Activated CD4-positive, alpha-beta T cell treated with anti-CD3 and anti-CD28 coated beads, Interleukin-2, amount 10 ng/mL, durations not matched to agents 24 days and 14 days (primary cell): ENCODE measurements at regions of chr15 and their contacts with region 1.

Region 1: DNA sequence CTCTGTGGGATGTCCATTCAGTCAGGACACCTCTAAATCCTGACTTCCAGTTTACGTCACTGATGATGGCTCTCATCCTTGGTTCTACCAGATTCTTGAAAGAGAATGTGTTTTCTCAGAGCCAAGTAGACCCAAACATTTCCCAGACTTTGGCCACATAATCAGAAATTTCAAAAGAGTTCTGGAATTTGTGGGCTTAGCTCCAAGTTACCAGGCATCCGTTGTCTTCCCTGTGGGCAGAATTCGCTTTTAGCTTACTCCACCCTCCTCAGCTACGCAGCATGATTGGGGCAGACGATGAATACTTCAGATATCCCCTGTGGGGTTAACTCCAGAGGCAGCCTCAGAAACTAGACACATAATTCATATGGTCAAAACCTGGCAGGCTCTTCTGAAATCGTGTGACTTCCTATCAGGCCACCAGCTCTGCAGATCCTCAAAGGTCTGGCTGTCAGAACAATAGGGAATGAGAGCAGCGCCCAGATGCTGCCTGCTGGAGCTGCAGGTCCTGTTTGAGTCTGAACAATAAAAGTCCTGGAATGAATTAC is 30.6 kb downstream of the CRTC3 start:
- DNase-seq: no peak
- H3K4me3 Mint-ChIP-seq: no peak overlapping the region
- H3K27ac Mint-ChIP-seq: no peak overlapping the region
- H3K4me1 Mint-ChIP-seq: peaks cover 75% of the 10 kb centered on the region
- H3K27me3 Mint-ChIP-seq: no peaks in the 10 kb centered on the region

Region 2: GRCh38 chr15:90539789-90540188 is 20.5 kb before region 1 on chr15:
- intact Hi-C with region 1: loop called (anchors 2 kb)
- DNase-seq: peak; percentile 82
- H3K4me3 Mint-ChIP-seq: peak overlapping the region; percentile 83
- H3K27ac Mint-ChIP-seq: peak overlapping the region; percentile 92
- H3K4me1 Mint-ChIP-seq: peaks cover 73% of the 10 kb centered on the region
- H3K27me3 Mint-ChIP-seq: no peaks in the 10 kb centered on the region

Region 3: DNA sequence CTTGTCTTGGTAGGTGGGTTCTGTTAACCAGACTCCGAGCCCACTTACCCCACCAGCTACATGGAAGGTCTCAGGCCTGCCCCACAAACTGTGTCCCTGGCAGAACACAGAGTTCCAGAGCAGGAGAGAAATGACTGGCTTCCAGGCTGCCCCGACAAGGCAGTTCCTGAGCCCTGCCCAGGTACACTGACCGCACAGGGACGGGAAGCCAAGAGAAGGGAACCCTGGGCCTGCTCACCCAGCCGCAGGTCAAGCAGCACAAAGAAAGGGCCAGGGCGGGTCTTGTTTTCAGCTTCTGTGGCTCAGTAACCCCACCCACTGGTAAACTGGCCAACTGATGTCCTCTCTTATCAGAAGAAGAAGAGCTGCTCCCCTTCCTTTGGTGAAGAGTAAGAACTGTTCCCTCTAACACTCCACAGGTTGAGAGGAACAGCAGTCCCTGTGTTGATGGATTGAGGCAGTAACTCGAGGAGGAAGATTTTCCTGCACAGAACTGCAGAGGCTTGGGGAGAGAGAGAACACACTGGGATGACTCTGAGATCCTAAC is 37.8 kb after region 1 on chr15:
- intact Hi-C with region 1: loop called (anchors 1 kb)
- DNase-seq: peak; percentile 76
- H3K4me3 Mint-ChIP-seq: peak overlapping the region; percentile 53
- H3K27ac Mint-ChIP-seq: peak overlapping the region; percentile 89
- H3K4me1 Mint-ChIP-seq: peaks cover 67% of the 10 kb centered on the region
- H3K27me3 Mint-ChIP-seq: no peaks in the 10 kb centered on the region

Region 4: DNA sequence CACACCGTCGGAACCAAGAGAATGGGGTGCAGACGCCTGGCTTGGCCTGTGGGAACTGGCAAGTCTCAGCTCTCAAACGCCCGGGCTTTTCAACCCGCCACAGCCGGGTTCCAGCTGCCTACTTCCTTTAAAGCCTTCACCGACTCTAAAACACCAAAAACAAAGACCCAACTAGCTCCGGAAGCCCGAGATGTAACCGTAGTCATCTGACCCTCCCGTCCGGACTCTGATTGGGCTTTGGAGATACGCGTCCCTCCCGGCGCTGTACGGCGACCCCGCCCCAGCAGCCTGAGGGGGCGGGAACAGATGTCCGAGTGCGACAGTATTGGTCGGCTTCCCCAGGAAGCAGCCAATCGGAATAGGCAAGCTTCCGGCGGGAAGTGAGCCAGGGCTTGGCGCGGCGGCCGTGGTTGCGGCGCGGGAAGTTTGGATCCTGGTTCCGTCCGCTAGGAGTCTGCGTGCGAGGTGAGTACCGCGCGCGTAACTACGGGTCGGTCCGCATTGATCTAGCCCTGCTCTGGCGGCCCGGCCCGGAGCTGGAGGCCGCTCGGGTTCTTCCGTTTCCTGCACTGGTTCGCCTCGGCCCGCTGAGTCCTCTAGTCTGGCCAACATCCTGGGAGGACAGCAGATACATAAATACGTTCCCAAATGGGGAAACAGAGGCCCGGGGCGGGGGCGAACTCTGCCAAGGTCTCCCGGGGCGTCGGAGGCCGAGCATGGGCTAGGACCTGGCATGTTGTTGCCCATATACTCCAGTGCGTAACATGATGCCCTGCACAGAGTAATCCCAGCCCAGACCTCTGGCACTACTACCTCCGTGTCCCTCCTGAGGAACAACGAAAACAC is 156.9 kb after region 1 on chr15 and contains the start of gene BLM:
- intact Hi-C with region 1: loop called (anchors 10 kb)
- DNase-seq: peak; percentile 99
- H3K4me3 Mint-ChIP-seq: peak within 1 kb of the TSS; percentile 88
- H3K27ac Mint-ChIP-seq: peak within 1 kb of the TSS; percentile 96
- H3K4me1 Mint-ChIP-seq: peaks cover 27% of the 10 kb centered on the region
- H3K27me3 Mint-ChIP-seq: no peaks in the 10 kb centered on the region
- total RNA-seq, gene BLM: 64.1 and 66.4 TPM in 2 replicates

Region 5: DNA sequence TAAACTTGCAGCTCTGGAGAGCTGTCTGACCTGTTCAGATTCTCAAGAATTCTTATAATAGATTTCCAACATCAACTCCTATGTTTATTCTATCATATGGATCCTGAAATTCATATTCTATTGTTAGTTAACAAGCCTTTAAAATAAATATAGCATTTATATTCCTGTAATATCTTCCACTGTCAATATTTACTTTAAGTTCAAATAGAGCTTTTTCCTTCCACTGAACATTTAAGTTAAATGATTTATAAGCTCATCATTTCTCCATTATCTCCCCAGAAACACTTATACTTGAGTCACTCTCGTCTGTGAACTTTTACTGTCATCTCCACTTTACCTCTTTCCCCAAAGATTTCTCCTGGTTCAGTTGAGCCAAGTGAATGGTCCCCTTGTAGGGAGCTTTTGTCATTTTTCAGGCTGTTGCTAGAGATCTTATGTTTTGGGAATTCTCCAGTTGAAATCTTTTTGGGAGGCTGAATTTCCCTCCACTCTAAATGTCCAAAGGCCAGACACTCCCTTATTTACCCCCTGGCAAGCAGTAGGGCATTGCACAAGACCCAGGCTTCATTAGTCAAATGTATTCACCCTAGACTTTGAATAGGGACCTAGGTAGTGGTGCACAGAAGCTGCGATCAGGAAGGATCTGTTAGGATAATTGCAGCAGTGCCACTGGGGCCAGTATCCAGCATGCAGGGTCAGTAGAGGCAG is 936.5 kb after region 1 on chr15:
- intact Hi-C with region 1: no loop called
- DNase-seq: no peak
- H3K4me3 Mint-ChIP-seq: no peak overlapping the region
- H3K27ac Mint-ChIP-seq: no peak overlapping the region
- H3K4me1 Mint-ChIP-seq: no peaks in the 10 kb centered on the region
- H3K27me3 Mint-ChIP-seq: peaks cover 17% of the 10 kb centered on the region